HAP-1 (cell line): ENCODE measurements at regions of chr11 and their contacts with region 1.

Region 1: DNA sequence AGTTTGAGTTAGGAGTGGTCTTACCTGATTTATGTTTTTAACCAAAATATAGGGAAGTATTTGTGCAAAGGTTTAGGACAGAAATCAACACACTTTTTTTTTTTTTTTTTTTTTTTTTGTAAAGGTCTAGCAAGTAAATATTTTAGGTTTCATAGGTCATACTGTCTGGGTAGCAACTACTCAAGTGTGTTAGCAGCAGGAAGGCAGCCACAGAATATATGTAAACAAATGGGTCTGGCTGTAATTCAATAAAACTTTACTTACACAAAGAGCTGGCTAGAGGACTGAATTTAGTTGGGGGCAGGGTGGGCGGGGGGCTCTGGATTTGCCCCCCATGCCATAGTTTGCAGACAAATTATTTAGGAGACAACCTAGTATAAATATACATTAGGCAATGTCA is 510.4 kb downstream of the NELL1 start:
- DNase-seq: no peak
- H3K4me3 ChIP-seq: no peak overlapping the region
- H3K4me1 ChIP-seq: no peaks in the 10 kb centered on the region
- H3K27me3 ChIP-seq: no peaks in the 10 kb centered on the region

Region 2: DNA sequence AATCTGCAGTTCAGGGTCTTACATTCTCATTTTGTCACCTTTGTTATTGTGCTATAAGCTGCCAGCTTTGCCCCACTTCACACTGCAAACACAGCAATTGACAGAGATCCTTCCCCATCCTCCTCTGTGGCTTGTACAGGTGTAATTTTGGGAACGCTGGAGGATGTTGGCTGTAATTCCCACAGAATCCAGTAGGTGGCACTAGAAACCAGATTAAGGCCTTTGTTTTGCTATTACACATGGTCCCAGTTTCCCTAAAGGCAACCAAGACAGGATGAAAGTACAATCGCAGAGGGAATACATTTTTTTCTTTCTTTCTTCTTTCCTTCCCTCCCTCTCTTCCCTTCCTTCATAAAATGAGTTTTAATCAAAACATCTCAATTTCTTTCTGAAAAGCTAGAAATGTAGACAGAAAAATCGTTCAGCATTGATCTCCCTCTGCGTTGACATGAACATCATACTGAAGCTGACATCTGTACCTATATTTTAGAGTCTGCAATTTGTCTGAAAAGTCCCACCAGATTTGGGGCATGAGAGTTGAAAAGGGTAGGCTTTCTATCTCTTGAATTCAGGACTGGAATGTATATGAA is 531.7 kb before region 1 on chr11:
- in situ Hi-C with region 1: loop called (anchors 25 kb)
- DNase-seq: peak; percentile 65 to 77
- H3K4me3 ChIP-seq: no peak overlapping the region
- H3K4me1 ChIP-seq: no peaks in the 10 kb centered on the region
- H3K27me3 ChIP-seq: no peaks in the 10 kb centered on the region

Region 3: GRCh38 chr11:20934516-20934915 is 245.3 kb before region 1 on chr11:
- in situ Hi-C with region 1: no loop called
- DNase-seq: no peak
- H3K4me3 ChIP-seq: no peak overlapping the region
- H3K4me1 ChIP-seq: no peaks in the 10 kb centered on the region
- H3K27me3 ChIP-seq: no peaks in the 10 kb centered on the region

Region 4: DNA sequence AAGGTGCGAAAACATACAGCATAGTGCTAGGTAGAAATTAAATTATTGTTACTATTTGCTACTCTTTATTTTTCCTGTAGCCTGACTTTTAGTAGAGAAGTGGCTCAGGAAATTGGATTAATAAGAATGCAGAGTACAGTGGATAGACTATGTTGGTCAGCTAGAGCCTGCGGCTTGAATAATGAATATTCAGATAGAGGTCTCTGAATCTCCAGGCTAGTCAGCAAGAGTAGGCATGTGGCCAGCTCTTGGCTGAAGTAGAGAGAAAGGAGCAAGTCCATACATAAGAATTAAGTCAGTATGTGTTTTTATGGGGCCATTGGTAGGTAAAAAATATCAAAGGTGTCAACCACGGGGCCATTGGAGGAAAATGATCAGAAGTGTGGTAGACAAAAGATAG is 96.9 kb before region 1 on chr11:
- in situ Hi-C with region 1: loop called (anchors 25 kb)
- DNase-seq: no peak
- H3K4me3 ChIP-seq: no peak overlapping the region
- H3K4me1 ChIP-seq: no peaks in the 10 kb centered on the region
- H3K27me3 ChIP-seq: no peaks in the 10 kb centered on the region

Region 5: DNA sequence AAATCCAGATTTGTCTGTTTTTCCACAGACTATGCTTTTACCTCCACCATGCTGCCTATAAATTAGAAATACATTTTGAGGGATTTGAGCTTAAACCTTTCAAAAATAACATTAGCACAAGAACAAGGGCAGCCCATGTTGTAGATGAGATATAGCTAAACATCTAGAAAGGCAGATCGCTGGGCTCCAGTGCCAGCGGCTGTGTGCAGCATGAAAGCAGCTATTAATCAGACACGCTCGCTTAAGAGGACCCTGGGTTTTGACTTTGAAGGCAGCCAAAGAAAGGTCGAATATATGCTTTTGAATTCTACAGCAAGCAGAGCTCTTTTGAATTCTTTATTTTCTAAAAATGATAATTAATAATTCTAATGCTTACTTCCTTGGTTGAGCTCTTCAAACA is 173.7 kb after region 1 on chr11:
- in situ Hi-C with region 1: no loop called
- DNase-seq: no peak
- H3K4me3 ChIP-seq: no peak overlapping the region
- H3K4me1 ChIP-seq: no peaks in the 10 kb centered on the region
- H3K27me3 ChIP-seq: no peaks in the 10 kb centered on the region

Region 6: DNA sequence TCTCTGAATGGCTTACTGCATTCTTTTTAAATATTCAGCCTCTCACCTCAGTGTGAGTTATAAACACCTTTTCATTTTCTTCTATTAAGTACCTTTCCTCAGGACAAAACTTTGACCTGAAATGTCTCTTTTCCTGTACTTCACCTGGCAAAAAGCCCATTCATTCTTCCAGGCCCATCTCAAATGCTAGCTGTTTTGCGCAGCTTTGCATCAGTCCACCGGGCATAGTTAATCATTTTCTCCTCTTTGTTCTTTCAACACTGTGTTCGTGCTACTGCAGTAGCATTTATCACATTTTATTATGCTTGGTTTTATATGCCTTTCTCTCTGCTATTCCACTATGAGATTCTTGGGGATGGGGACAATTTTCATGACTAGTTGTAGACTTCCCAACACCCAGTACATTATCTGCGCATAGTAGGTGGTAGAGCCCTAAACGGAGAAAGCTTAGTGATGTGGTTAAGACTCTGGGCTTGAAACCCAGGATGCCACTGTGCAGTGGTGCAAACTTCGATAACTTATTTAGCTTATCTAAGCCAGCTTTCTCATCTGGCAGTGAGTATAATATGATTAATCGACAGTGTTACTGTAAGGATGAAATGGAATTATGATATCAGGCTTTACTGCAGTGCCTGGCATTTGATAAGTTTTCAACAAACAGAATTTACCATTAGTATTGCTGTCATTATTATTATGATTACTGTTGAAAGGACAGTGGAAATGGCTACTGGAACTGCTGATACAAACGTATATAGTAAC is 185.3 kb after region 1 on chr11:
- in situ Hi-C with region 1: no loop called
- DNase-seq: no peak
- H3K4me3 ChIP-seq: no peak overlapping the region
- H3K4me1 ChIP-seq: no peaks in the 10 kb centered on the region
- H3K27me3 ChIP-seq: no peaks in the 10 kb centered on the region

Region 7: GRCh38 chr11:21640491-21640890 is 460.7 kb after region 1 on chr11:
- in situ Hi-C with region 1: no loop called
- DNase-seq: no peak
- H3K4me3 ChIP-seq: no peak overlapping the region
- H3K4me1 ChIP-seq: no peaks in the 10 kb centered on the region
- H3K27me3 ChIP-seq: no peaks in the 10 kb centered on the region